Activated naive CD4-positive, alpha-beta T cell treated with anti-CD3 and anti-CD28 coated beads for 36 hours (primary cell): ENCODE measurements at regions of chr12 and their contacts with region 1.

Region 1: GRCh38 chr12:67268896-67269631 is at the start of gene CAND1:
- DNase-seq: peak; percentile 97
- H3K4me3 Mint-ChIP-seq: peak within 1 kb of the TSS; percentile 89
- H3K27ac Mint-ChIP-seq: peak within 1 kb of the TSS; percentile 100
- H3K4me1 Mint-ChIP-seq: peaks cover 33% of the 10 kb centered on the region
- H3K27me3 Mint-ChIP-seq: no peaks in the 10 kb centered on the region
- total RNA-seq, gene CAND1: 221 to 224 TPM

Region 2: DNA sequence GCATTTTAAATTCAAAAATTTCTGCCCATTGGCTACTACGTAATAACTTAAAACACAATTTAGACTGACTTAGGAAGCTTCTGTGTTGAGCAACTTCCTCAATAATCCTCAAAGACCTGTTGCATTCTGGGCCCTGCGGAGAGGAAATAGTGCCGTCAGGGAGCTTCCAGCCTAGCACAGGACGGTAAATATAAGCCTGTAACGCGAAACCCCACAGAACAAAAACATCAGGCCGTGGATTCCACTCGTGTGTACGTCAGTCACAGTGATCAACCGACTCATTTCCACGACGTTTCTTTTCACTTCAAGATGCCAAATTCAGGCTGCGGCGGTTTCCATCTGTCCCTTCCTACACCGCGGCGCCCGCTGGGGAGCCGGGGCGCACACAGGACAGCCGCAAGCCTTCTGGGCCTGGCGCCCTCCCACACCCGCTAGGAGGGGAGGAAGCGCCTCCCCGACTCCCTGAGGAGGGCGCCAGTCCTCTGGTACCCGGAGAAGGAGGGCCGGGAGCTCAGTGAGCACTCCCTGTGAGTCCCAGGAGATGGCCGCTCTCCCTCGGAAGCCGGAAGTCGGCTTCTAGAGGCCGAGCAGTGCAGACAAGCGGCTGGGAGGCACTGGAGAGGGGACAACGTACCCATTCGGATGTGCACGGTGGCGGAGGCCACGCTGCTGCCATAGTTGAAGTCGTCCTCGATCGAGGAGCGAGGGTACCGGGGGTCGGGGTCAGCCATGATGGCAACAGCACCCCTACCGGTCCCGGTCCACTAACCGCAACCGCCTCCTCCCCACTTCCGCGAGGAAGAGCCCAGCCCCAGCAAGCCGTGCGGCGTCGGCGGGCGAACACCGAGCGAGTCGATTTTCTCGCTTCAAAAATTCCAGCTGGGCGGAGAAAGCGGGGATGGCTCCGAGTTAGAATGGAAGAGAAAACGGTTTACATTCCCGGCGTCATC is 1099.6 kb before region 1 on chr12 and contains the start of gene TMBIM4:
- CTCF ChIA-PET with region 1: no interaction called
- intact Hi-C with region 1: loop called (anchors 1 kb)
- DNase-seq: peak; percentile 93
- H3K4me3 Mint-ChIP-seq: peak within 1 kb of the TSS; percentile 98
- H3K27ac Mint-ChIP-seq: peak within 1 kb of the TSS; percentile 100
- H3K4me1 Mint-ChIP-seq: peaks cover 42% of the 10 kb centered on the region
- H3K27me3 Mint-ChIP-seq: no peaks in the 10 kb centered on the region
- total RNA-seq, gene TMBIM4: 51.2 to 51.3 TPM

Region 3: DNA sequence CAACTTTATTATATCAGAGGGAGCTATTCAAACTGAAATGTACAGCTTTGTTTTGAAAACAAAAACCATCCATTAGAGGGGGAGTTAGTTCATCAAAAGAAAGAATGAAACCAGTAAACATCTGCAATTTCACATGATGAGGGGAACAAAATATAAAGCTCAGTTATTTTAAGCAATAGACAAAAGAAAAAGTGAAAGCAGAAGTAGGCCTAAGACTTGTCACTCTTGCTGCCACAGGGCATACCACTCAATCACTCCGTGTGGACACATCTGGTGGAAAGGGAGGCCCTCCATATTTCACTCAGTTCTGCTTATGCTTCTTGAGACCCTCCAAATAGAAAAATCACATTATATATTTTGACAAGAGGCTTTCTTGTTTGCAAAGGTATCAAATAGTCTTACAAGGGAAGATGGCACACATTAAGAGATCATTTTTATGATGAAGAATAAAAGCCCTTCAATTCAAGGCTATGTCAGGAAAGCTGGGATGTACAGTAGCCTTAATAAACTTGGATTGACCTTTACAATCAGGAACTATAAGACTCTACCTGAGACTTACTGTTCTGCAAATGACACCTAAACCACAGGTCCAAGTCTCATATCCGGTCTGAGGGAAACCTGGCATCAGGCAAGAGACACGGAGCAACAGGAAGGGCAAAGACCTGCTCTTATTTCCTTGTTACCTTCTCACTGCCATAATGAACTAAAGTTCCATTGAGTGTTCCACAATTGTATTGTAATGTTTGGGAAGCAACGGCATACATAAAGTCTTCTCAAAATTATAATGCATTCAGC is 367.7 kb before region 1 on chr12:
- CTCF ChIA-PET with region 1: no interaction called
- intact Hi-C with region 1: loop called (anchors 5 kb)
- DNase-seq: no peak
- H3K4me3 Mint-ChIP-seq: no peak overlapping the region
- H3K27ac Mint-ChIP-seq: peak overlapping the region; percentile 17
- H3K4me1 Mint-ChIP-seq: peaks cover 35% of the 10 kb centered on the region
- H3K27me3 Mint-ChIP-seq: no peaks in the 10 kb centered on the region

Region 4: GRCh38 chr12:67441736-67442346 is 172.8 kb after region 1 on chr12:
- CTCF ChIA-PET with region 1: no interaction called
- intact Hi-C with region 1: loop called (anchors 2 kb)
- DNase-seq: peak; percentile 93
- H3K4me3 Mint-ChIP-seq: peak overlapping the region; percentile 7
- H3K27ac Mint-ChIP-seq: no peak overlapping the region
- H3K4me1 Mint-ChIP-seq: peaks cover 19% of the 10 kb centered on the region
- H3K27me3 Mint-ChIP-seq: no peaks in the 10 kb centered on the region

Region 5: GRCh38 chr12:67630373-67631088 is 361.5 kb after region 1 on chr12:
- CTCF ChIA-PET with region 1: no interaction called
- intact Hi-C with region 1: loop called (anchors 2 kb)
- DNase-seq: peak; percentile 93
- H3K4me3 Mint-ChIP-seq: peak overlapping the region; percentile 33
- H3K27ac Mint-ChIP-seq: peak overlapping the region; percentile 79
- H3K4me1 Mint-ChIP-seq: peaks cover 81% of the 10 kb centered on the region
- H3K27me3 Mint-ChIP-seq: no peaks in the 10 kb centered on the region

Region 6: DNA sequence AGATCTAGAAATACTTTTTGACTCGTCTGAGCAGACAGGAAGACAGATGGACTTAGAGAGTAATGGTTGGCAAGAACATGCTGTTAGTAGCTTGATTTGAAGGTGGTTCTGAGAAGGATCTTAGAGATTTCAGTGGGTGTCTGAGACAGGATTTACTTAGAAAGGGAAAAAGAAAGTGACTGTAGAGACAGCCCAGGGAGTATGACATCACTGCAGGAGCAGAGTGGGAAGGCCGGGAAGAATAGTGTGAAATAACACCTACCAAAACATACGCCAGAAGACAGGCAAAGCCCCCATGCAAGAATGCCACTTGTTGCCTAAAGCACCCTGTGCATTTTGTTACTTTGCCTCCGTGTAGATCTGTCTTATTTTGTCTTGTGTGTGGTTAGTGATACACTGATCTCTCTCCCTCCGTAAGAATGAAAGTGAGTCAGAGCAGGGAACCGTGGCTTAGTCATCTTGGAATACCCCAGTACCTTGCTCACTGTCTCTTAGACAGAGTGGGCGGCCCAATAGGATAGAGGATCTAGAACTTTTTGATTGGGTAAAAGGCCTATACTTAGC is 558.8 kb after region 1 on chr12:
- CTCF ChIA-PET with region 1: no interaction called
- intact Hi-C with region 1: no loop called
- DNase-seq: peak; percentile 79
- H3K4me3 Mint-ChIP-seq: peak overlapping the region; percentile 30
- H3K27ac Mint-ChIP-seq: peak overlapping the region; percentile 65
- H3K4me1 Mint-ChIP-seq: peaks cover 11% of the 10 kb centered on the region
- H3K27me3 Mint-ChIP-seq: no peaks in the 10 kb centered on the region

Region 7: GRCh38 chr12:68807576-68808387 is 1538.7 kb after region 1 on chr12 and contains the start of gene MDM2:
- CTCF ChIA-PET with region 1: no interaction called
- intact Hi-C with region 1: loop called (anchors 5 kb)
- DNase-seq: peak; percentile 95
- H3K4me3 Mint-ChIP-seq: peak within 1 kb of the TSS; percentile 97
- H3K27ac Mint-ChIP-seq: peak within 1 kb of the TSS; percentile 98
- H3K4me1 Mint-ChIP-seq: peaks cover 24% of the 10 kb centered on the region
- H3K27me3 Mint-ChIP-seq: no peaks in the 10 kb centered on the region
- total RNA-seq, gene MDM2: 165 to 166 TPM